Activated naive CD4-positive, alpha-beta T cell treated with anti-CD3 and anti-CD28 coated beads for 36 hours (primary cell): ENCODE measurements at regions of chrX and their contacts with region 1.

Region 1: GRCh38 chrX:15854712-15855567 is at the start of gene AP1S2:
- DNase-seq: peak; percentile 91
- H3K4me3 Mint-ChIP-seq: peak within 1 kb of the TSS; percentile 88
- H3K27ac Mint-ChIP-seq: peak within 1 kb of the TSS; percentile 95
- H3K4me1 Mint-ChIP-seq: peaks cover 20% of the 10 kb centered on the region
- H3K27me3 Mint-ChIP-seq: no peaks in the 10 kb centered on the region
- total RNA-seq, gene AP1S2: 17.4 to 18.0 TPM

Region 2: DNA sequence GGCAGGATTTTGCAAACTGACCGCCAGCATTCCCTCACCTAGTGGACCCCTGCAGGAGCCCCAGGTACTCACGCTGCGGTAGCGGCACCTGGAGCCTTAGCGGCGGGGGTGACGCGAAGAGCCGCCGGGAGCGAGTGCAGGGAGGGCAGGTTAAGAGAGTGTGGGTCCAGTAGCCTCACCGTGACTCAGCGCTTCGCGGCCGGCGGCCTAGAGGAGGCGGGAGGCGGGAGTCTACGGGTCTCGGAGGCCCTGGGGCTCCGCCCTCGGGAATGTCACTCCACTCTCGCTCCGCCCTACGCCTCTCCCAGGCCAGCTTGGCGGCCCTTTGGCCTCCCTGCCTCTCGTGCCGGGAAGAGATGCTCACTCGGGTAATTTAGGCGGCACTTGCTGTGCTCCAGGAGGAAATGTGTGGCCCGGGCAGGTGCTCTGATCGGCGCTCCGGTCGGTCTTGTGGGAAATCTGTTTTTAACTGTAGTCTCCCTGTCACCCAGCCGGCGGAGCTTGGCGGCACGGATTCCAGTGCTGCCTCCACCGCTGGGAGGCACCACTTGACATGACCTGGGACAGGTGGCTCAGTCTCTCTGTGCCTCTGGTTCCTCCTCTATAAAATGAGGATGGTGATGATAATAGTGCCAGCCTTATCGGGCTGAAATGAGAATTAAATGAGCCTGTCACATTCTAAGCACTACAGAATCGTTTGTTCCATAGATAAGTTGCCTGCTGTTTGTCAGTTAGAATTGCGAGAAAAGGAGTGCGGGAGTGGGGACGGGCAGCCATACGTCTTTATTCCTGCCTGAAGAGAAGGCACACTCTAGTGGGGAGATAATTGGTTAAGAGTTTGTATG is 361.6 kb before region 1 on chrX and contains the start of gene PIR:
- CTCF ChIA-PET with region 1: no interaction called
- intact Hi-C with region 1: loop called (anchors 2 kb)
- DNase-seq: peak; percentile 75
- H3K4me3 Mint-ChIP-seq: peak within 1 kb of the TSS; percentile 83
- H3K27ac Mint-ChIP-seq: peak within 1 kb of the TSS; percentile 68
- H3K4me1 Mint-ChIP-seq: peaks cover 6% of the 10 kb centered on the region
- H3K27me3 Mint-ChIP-seq: no peaks in the 10 kb centered on the region
- total RNA-seq, gene PIR: 6.2 to 9.2 TPM

Region 3: GRCh38 chrX:15631637-15632036 is 223.3 kb before region 1 on chrX:
- CTCF ChIA-PET with region 1: no interaction called
- intact Hi-C with region 1: no loop called
- DNase-seq: no peak
- H3K4me3 Mint-ChIP-seq: no peak overlapping the region
- H3K27ac Mint-ChIP-seq: no peak overlapping the region
- H3K4me1 Mint-ChIP-seq: no peaks in the 10 kb centered on the region
- H3K27me3 Mint-ChIP-seq: peaks cover 2% of the 10 kb centered on the region

Region 4: GRCh38 chrX:15749642-15750610 is 105.0 kb before region 1 on chrX:
- CTCF ChIA-PET with region 1: no interaction called
- intact Hi-C with region 1: loop called (anchors 2 kb)
- DNase-seq: peak; percentile 31
- H3K4me3 Mint-ChIP-seq: peak overlapping the region; percentile 47
- H3K27ac Mint-ChIP-seq: peak overlapping the region; percentile 92
- H3K4me1 Mint-ChIP-seq: peaks cover 68% of the 10 kb centered on the region
- H3K27me3 Mint-ChIP-seq: no peaks in the 10 kb centered on the region

Region 5: DNA sequence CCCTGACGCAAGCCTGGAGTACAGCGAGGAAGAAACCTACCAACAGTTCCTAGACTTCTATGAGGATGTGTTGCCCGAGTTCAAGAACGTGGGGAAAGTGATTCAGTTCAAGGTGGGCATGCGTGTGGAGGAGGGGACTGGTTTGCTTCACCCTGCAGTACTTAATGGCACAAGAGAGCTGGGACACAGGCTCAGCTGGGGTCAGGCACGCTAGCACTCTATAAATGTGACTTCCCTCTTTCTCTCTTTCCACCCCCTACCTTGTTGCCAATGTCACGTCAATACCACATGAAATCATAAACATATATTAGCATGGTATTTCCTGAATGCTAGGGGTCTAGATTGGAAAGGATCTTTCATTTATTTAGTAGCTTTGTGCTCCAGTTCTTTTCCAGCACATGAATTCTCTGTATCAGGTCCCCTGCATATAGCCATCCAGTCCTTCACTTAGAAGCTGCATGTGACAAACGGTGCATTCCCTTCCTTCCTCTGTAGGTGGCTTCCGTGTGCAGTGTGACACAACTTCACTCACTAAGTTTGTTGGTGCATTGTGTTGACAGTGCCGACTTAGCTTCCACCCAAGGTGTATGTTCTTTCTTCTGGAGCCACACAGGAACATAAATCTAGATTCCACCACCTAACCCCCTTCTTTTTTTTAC is 39.0 kb before region 1 on chrX:
- CTCF ChIA-PET with region 1: no interaction called
- intact Hi-C with region 1: loop called (anchors 1 kb)
- DNase-seq: peak; percentile 49
- H3K4me3 Mint-ChIP-seq: no peak overlapping the region
- H3K27ac Mint-ChIP-seq: peak overlapping the region; percentile 78
- H3K4me1 Mint-ChIP-seq: peaks cover 40% of the 10 kb centered on the region
- H3K27me3 Mint-ChIP-seq: no peaks in the 10 kb centered on the region

Region 6: DNA sequence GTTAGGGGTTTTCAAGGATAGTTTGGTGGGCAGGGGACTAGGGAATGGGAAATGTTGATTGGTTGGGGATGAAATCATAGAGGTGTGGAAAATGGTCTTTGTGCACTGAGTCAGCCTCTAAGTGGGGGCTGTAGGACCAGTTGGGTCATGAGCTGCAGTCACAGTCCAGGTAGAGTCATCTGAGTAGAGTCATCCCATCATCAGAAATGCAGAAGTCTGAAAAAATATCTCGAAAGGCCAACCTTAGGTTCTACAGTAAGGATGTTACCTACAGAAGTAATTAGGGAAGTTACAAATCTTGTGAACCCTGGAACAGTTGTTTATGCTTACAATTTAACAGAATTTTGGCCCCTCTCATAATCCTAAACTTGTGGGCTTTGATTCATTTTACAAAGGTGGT is 63.1 kb after region 1 on chrX:
- CTCF ChIA-PET with region 1: no interaction called
- intact Hi-C with region 1: no loop called
- DNase-seq: no peak
- H3K4me3 Mint-ChIP-seq: no peak overlapping the region
- H3K27ac Mint-ChIP-seq: no peak overlapping the region
- H3K4me1 Mint-ChIP-seq: peaks cover 3% of the 10 kb centered on the region
- H3K27me3 Mint-ChIP-seq: no peaks in the 10 kb centered on the region

Region 7: GRCh38 chrX:15988661-15989603 is 134.0 kb after region 1 on chrX:
- CTCF ChIA-PET with region 1: no interaction called
- intact Hi-C with region 1: loop called (anchors 5 kb)
- DNase-seq: no peak
- H3K4me3 Mint-ChIP-seq: no peak overlapping the region
- H3K27ac Mint-ChIP-seq: no peak overlapping the region
- H3K4me1 Mint-ChIP-seq: peaks cover 9% of the 10 kb centered on the region
- H3K27me3 Mint-ChIP-seq: peaks cover 9% of the 10 kb centered on the region

Region 8: DNA sequence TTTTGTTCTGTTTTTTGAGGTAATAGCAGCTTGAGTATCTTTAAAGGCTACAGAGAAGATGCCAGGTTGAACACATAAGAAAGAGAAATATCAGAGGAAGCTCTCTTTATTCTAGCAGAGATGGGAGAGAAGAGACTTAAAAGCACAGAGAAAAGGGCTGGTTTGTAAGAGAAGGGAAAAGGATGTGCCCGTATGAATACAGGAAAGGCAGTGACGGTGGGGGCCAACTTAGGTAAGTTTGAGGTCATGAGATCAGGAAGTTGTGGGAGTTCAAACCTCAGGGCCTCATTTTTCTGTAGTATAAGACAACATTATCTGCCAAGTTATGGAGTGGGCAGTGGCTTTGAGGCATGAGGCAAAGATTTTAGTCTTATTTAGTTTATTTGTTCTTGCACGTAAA is 673.7 kb after region 1 on chrX:
- CTCF ChIA-PET with region 1: no interaction called
- intact Hi-C with region 1: loop called (anchors 1 kb)
- DNase-seq: peak; percentile 64
- H3K4me3 Mint-ChIP-seq: peak overlapping the region; percentile 10
- H3K27ac Mint-ChIP-seq: peak overlapping the region; percentile 94
- H3K4me1 Mint-ChIP-seq: peaks cover 38% of the 10 kb centered on the region
- H3K27me3 Mint-ChIP-seq: no peaks in the 10 kb centered on the region